Heart left ventricle (tissue), 16 donors: ENCODE measurements at regions of chr1 and their contacts with region 1.

Region 1: DNA sequence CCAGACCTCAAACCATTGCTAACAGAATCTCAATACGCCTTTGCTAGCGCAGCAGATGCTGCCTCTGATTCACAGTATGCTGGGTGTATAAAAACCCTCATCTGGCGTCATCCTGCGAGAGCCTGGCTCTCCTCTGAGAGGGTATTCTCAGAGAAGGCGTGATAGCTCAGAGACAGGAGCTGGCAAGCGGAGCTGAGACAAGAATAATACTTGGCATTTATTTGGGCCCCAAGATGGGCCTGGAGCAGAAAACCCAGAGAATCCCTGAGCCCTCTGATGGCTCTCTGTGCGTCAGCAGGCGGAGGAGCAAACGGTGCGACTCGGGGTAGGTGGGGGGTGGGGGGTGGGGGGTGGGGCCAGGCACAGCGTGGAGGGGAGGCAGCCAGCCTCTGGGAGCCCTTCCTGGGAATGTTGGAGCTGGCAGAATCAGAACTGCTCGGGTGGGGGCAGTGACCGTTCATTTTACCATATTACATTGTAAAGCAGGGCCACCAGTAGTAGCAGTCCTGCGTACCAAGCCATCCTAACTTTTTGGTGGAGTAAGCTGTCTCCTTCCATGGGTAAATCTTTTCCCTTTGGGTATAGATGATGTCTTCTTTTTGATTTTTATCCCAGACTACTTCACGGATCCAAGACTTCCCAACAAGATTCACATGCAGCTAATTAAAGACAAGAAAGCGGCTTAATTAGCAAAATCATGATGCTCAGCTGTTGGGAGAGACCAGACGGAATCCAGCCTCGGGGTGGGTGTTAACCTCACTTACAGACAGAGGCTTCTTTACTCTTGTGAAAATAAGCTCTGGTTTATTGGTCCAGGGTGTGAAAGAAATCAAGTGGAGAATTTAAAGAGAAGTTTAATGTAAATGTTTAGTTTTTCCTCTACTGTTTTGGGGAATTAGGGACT is 7.1 kb downstream of the RIIAD1 start:
- DNase-seq: peak in 2 of 5 donors; percentile 43 to 51
- ATAC-seq: peak; percentile 86 to 93 (median 91)
- H3K4me3 ChIP-seq: peak overlapping the region in 9 of 12 donors; percentile 9 to 38 (median 23)
- H3K27ac ChIP-seq: peak overlapping the region in 7 of 12 donors; percentile 16 to 79 (median 60)
- H3K4me1 ChIP-seq: peaks cover 0 to 12% (median 1%) of the 10 kb centered on the region in 12 donors
- H3K27me3 ChIP-seq: peaks cover 0 to 21% (median 0%) of the 10 kb centered on the region in 9 donors
- CTCF ChIP-seq: no peak
- POLR2A ChIP-seq: no peak

Region 2: DNA sequence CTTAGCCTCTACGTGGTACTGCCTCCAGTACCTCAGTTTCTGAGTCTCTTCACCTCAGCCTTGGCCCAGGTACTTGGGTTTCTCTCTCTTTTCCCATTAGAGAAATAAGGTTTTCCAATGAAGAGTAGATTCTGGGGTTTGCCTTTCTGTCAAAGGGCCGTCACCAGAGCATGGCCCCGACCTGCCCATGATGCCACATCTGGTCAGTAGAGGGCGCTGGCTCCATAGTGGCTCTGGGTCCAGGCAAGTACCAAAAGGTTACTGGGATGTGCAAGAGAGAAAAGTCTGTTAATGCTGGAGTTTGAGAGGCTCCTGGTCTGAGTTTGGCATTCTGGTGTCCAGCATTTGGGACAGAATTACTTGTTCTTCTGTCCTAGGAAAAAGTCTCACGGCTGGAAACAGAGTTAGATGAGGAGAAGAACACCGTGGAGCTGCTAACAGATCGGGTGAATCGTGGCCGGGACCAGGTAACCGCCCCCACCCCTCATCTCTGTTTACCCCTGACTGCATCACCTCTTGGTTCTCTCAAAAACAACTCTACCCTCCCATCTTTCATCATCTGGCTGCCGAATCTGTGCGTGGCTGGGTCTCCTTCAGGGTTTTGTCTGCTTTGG is 193.6 kb before region 1 on chr1:
- intact Hi-C with region 1: loop called in 5 of 10 experiments (anchors 2 to 5 kb)
- DNase-seq: peak; percentile 65 to 88 (median 75)
- ATAC-seq: peak; percentile 68 to 75 (median 70)
- H3K4me3 ChIP-seq: no peak overlapping the region
- H3K27ac ChIP-seq: no peak overlapping the region
- H3K4me1 ChIP-seq: peaks cover 0 to 8% (median 6%) of the 10 kb centered on the region in 12 donors
- H3K27me3 ChIP-seq: no peaks in the 10 kb centered on the region
- CTCF ChIP-seq: peak; percentile 67 to 92 (median 80)
- POLR2A ChIP-seq: no peak

Region 3: GRCh38 chr1:151539990-151540981 is 188.1 kb before region 1 on chr1 and contains the start of gene TUFT1:
- intact Hi-C with region 1: loop called in 4 of 10 experiments (anchors 2 to 5 kb)
- DNase-seq: peak; percentile 89 to 94 (median 94)
- ATAC-seq: peak; percentile 96 to 98 (median 98)
- H3K4me3 ChIP-seq: peak within 1 kb of the TSS; percentile 38 to 82 (median 76)
- H3K27ac ChIP-seq: peak within 1 kb of the TSS in 10 of 12 donors; percentile 28 to 86 (median 62)
- H3K4me1 ChIP-seq: peaks cover 0 to 21% (median 12%) of the 10 kb centered on the region in 12 donors
- H3K27me3 ChIP-seq: no peaks in the 10 kb centered on the region
- CTCF ChIP-seq: no peak
- POLR2A ChIP-seq: peak; percentile 83 to 88
- total RNA-seq, gene TUFT1: 2.1 to 13.6 (median 4.3) TPM

Region 4: GRCh38 chr1:151594143-151594625 is 134.2 kb before region 1 on chr1:
- intact Hi-C with region 1: loop called in 3 of 10 experiments (anchors 5 kb)
- DNase-seq: peak; percentile 60 to 84 (median 71)
- ATAC-seq: peak in 3 of 4 donors; percentile 61 to 67 (median 62)
- H3K4me3 ChIP-seq: peak overlapping the region in 3 of 12 donors; percentile 5 to 18 (median 13)
- H3K27ac ChIP-seq: no peak overlapping the region
- H3K4me1 ChIP-seq: peaks cover 0 to 7% (median 0%) of the 10 kb centered on the region in 12 donors
- H3K27me3 ChIP-seq: peaks cover 0 to 5% (median 0%) of the 10 kb centered on the region in 9 donors
- CTCF ChIP-seq: peak; percentile 79 to 94 (median 88)
- POLR2A ChIP-seq: no peak

Region 5: DNA sequence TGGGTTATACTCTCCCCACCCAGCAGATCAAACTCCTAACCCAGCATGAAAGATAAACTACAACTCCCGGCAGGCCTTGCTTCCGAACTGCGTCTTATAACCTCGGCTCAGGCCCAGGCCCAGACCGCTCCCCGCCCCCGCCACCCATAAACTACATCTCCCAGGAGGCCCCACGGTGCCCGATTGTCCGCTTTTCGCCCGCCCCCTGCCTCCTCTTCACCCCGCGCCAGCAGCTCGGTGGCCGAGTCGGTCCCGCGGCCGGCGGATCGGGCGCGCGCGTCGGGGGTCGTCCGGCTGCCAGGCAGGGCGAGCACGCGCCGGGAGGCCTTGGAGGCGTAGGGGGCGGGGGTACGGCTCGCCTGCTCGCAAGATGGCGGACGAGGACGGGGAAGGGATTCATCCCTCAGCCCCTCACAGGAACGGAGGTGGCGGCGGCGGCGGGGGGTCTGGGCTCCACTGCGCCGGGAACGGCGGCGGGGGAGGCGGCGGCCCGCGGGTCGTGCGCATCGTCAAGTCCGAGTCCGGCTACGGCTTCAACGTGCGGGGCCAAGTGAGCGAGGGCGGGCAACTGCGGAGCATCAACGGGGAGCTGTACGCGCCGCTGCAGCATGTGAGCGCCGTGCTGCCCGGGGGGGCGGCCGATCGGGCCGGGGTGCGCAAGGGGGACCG is 116.4 kb before region 1 on chr1 and contains the start of gene SNX27:
- intact Hi-C with region 1: loop called in 1 of 10 experiments (anchors 5 kb)
- DNase-seq: peak; percentile 93 to 94 (median 94)
- ATAC-seq: peak; percentile 96 to 97 (median 97)
- H3K4me3 ChIP-seq: peak within 1 kb of the TSS; percentile 56 to 100 (median 89)
- H3K27ac ChIP-seq: peak within 1 kb of the TSS; percentile 40 to 98 (median 94)
- H3K4me1 ChIP-seq: peaks cover 0 to 55% (median 10%) of the 10 kb centered on the region in 12 donors
- H3K27me3 ChIP-seq: no peaks in the 10 kb centered on the region
- CTCF ChIP-seq: peak in 1 of 12 donors; percentile 14
- POLR2A ChIP-seq: peak in 1 of 2 donors; percentile 85
- total RNA-seq, gene SNX27: 21.6 to 39.4 (median 33.2) TPM

Region 6: GRCh38 chr1:151693076-151693651 is 35.2 kb before region 1 on chr1:
- intact Hi-C with region 1: loop called in 1 of 10 experiments (anchors 5 kb)
- DNase-seq: no peak
- ATAC-seq: peak in 2 of 4 donors; percentile 38 to 43
- H3K4me3 ChIP-seq: no peak overlapping the region
- H3K27ac ChIP-seq: no peak overlapping the region
- H3K4me1 ChIP-seq: peaks cover 0 to 13% (median 0%) of the 10 kb centered on the region in 12 donors
- H3K27me3 ChIP-seq: no peaks in the 10 kb centered on the region
- CTCF ChIP-seq: peak; percentile 17 to 61 (median 45)
- POLR2A ChIP-seq: no peak

Region 7: GRCh38 chr1:151820940-151821339 is 92.5 kb after region 1 on chr1:
- intact Hi-C with region 1: no loop called
- DNase-seq: no peak
- ATAC-seq: peak in 1 of 4 donors; percentile 28
- H3K4me3 ChIP-seq: no peak overlapping the region
- H3K27ac ChIP-seq: no peak overlapping the region
- H3K4me1 ChIP-seq: peaks cover 0 to 17% (median 0%) of the 10 kb centered on the region in 12 donors
- H3K27me3 ChIP-seq: no peaks in the 10 kb centered on the region
- CTCF ChIP-seq: no peak
- POLR2A ChIP-seq: no peak